ENCODE measurements at regions of chr1 and their contacts with region 1.

Region 1: DNA sequence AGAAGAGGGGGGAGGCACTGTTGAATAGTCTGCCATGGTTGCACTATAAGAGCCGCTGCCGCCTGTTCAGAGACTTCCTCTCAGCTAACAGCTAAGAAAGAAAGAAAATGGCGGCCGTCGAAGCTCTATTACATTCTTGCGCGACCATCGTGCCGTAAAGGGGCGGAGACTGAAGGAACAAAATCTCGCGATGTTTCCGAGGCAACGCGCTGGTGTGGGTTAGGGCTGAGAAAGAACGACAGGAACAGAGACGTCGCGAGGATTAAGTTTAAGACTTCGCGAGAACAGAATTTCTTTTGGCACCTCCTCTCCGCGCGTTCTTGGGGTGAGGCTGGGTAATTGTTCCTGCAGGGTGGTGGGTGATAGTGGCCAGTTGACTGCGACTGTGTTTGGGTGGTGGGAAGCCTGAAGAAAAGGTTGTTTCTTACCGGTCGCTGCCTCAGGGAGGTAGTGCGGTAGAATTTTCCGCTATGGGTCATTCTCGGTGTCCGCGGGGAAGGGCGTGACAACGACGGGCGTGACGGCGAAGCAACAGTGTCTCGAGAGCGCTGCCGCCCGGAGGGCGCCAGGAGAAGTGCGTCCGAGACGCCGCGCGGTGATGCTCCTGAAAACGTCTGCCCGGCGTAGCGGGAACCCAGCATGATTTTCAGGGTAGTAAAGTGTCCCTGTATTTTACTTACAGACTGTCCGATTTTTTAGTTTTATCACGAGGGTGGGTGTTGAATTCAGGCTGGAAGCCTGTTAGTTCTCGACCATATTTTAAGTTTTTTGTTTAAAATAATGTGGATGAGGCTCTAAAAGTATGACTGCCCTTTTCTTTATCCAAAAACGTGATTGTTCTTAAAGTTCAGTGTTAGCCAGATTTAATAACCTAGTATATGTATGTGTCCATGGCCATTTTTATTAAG is at the start of gene FUBP1:
- DNase-seq: peak; percentile 99
- H3K4me3 Mint-ChIP-seq: no peak within 1 kb of the TSS
- H3K27ac Mint-ChIP-seq: no peak within 1 kb of the TSS
- H3K4me1 Mint-ChIP-seq: peaks cover 47% of the 10 kb centered on the region
- H3K27me3 Mint-ChIP-seq: no peaks in the 10 kb centered on the region
- total RNA-seq, gene FUBP1: 243 to 244 TPM

Region 2: GRCh38 chr1:77281491-77282186 is 697.6 kb before region 1 on chr1 and contains the start of gene AK5:
- CTCF ChIA-PET with region 1: no interaction called
- intact Hi-C with region 1: loop called (anchors 5 kb)
- DNase-seq: peak; percentile 58
- H3K4me3 Mint-ChIP-seq: peak within 1 kb of the TSS; percentile 75
- H3K27ac Mint-ChIP-seq: no peak within 1 kb of the TSS
- H3K4me1 Mint-ChIP-seq: peaks cover 37% of the 10 kb centered on the region
- H3K27me3 Mint-ChIP-seq: no peaks in the 10 kb centered on the region
- total RNA-seq, gene AK5: 7.0 to 9.1 TPM

Region 3: DNA sequence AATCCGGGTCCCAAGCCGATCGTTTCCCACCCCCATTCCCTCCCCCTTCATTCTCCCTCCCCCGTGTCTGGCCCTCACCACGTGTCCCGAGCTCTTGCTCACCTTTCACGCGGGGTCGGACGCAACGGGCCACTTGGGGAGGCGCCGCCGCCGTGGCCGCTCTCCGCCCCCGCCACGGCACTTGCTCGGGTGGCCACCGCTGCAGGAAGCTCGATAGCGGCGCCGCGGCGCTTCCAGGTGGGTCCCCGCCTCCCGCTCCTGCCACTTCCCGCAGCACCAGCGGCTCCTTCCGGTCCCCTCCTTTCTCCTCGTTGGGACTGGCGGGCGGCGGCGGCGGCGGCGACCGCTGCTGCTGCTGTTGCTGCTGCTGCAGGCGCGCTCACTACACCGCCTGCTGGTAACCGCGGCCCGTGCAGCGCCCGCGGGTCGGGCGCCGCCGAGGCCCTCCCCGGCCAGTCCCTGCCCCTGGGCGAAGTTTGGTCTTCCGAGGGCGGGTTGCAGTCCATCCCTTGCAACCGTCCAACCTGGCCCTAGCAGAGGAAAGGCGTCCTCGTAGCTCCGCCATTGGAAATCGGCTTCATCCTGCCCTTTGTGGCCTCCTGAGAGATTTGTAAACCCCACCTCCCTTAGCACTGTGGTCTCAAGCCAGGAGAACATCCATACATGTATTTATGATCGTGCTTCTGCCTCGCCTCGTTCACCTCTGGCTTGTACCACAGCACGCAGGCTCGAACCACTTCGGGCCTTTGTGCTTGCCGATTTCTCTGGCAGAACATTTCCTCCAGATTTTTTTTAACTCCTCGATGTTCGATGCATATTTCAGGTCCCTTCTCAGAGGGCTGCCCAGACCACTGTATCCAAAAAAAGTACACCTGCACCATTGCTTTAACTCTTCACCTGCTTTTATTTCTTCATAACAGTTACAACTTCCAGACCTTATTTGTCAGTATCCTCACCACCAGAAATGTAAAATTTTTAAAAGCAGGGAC is 295.8 kb before region 1 on chr1:
- CTCF ChIA-PET with region 1: interaction called, 4 read pairs
- intact Hi-C with region 1: loop called (anchors 1 kb)
- DNase-seq: peak; percentile 94
- H3K4me3 Mint-ChIP-seq: peak overlapping the region; percentile 82
- H3K27ac Mint-ChIP-seq: peak overlapping the region; percentile 90
- H3K4me1 Mint-ChIP-seq: peaks cover 30% of the 10 kb centered on the region
- H3K27me3 Mint-ChIP-seq: no peaks in the 10 kb centered on the region

Region 4: GRCh38 chr1:77825131-77825709 is 154.0 kb before region 1 on chr1:
- CTCF ChIA-PET with region 1: no interaction called
- intact Hi-C with region 1: loop called (anchors 1 kb)
- DNase-seq: peak; percentile 42
- H3K4me3 Mint-ChIP-seq: no peak overlapping the region
- H3K27ac Mint-ChIP-seq: no peak overlapping the region
- H3K4me1 Mint-ChIP-seq: no peaks in the 10 kb centered on the region
- H3K27me3 Mint-ChIP-seq: no peaks in the 10 kb centered on the region

Region 5: GRCh38 chr1:77961392-77961791 is 17.8 kb before region 1 on chr1:
- CTCF ChIA-PET with region 1: interaction called, 4 read pairs
- intact Hi-C with region 1: loop called (anchors 1 kb)
- DNase-seq: no peak
- H3K4me3 Mint-ChIP-seq: no peak overlapping the region
- H3K27ac Mint-ChIP-seq: peak overlapping the region; percentile 51
- H3K4me1 Mint-ChIP-seq: peaks cover 38% of the 10 kb centered on the region
- H3K27me3 Mint-ChIP-seq: no peaks in the 10 kb centered on the region

Region 6: GRCh38 chr1:78081980-78082860 is 103.0 kb after region 1 on chr1:
- CTCF ChIA-PET with region 1: no interaction called
- intact Hi-C with region 1: loop called (anchors 1 kb)
- DNase-seq: no peak
- H3K4me3 Mint-ChIP-seq: no peak overlapping the region
- H3K27ac Mint-ChIP-seq: no peak overlapping the region
- H3K4me1 Mint-ChIP-seq: peaks cover 16% of the 10 kb centered on the region
- H3K27me3 Mint-ChIP-seq: peaks cover 4% of the 10 kb centered on the region

Region 7: GRCh38 chr1:78649628-78650027 is 670.4 kb after region 1 on chr1 and contains the start of gene IFI44:
- CTCF ChIA-PET with region 1: no interaction called
- intact Hi-C with region 1: loop called (anchors 5 kb)
- DNase-seq: peak; percentile 87
- H3K4me3 Mint-ChIP-seq: peak within 1 kb of the TSS; percentile 87
- H3K27ac Mint-ChIP-seq: peak within 1 kb of the TSS; percentile 74
- H3K4me1 Mint-ChIP-seq: peaks cover 50% of the 10 kb centered on the region
- H3K27me3 Mint-ChIP-seq: no peaks in the 10 kb centered on the region
- total RNA-seq, gene IFI44: 40.1 to 42.3 TPM

Measured in activated naive CD4-positive, alpha-beta T cell treated with anti-CD3 and anti-CD28 coated beads for 36 hours (primary cell).